RWPE1 (cell line): ENCODE measurements at regions of chr2 and their contacts with region 1.

Region 1: GRCh38 chr2:69798909-69799526 is 30.4 kb upstream of the GMCL1 start:
- DNase-seq: no peak
- H3K27ac ChIP-seq: peak overlapping the region; percentile 89
- CTCF ChIP-seq: no peak

Region 2: GRCh38 chr2:69781321-69782248 is 17.4 kb before region 1 on chr2:
- CTCF ChIA-PET with region 1: interaction called, 6 read pairs
- POLR2A ChIA-PET with region 1: interaction called, 11 read pairs
- DNase-seq: no peak
- H3K27ac ChIP-seq: no peak overlapping the region
- CTCF ChIP-seq: no peak

Region 3: DNA sequence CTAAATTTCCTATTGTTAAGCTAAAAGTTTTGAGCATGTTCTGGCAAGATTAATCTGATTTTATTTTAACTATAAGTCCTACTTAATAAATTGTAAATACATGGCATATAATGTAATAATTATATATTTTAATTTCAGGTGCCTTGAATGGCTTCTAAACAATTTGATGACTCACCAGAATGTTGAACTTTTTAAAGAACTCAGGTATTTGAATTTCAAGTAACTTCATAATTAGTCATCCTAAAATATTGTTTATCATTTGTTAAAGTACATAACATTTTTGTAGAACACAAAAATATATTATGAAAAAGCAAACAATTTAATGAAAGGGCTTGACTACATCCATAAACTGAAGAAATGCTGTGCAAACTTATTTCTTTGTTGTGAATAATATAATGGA is 45.0 kb after region 1 on chr2:
- CTCF ChIA-PET with region 1: no interaction called
- POLR2A ChIA-PET with region 1: no interaction called
- DNase-seq: no peak
- H3K27ac ChIP-seq: no peak overlapping the region
- CTCF ChIP-seq: no peak

Region 4: DNA sequence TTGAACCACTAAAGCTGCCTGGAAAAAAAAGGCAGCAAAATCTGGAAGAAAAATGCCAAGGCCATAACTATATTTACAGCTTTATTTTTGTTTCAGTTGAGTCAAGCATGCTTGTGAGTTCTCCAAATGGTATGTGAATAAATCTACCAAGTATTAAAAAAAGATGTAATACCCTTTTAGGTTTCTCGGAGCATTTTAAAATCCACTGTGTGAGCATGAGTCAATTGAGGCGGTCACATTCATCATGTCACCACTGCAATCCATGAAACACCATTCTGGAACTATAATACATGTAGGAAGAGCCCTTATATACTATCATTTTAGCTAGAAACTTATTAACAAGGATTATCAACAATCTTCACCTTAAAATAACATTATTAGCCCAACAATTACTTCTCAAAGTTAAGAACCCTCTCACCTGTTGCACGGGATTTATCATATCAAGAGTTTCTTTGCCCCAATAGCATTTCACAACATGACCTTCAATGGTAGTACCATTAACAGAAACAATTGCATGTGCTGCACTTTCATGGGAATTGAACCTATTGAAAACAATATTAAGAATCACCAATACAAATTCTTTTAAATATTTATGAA is 416.0 kb after region 1 on chr2:
- CTCF ChIA-PET with region 1: no interaction called
- POLR2A ChIA-PET with region 1: no interaction called
- DNase-seq: no peak
- H3K27ac ChIP-seq: no peak overlapping the region
- CTCF ChIP-seq: no peak